Activated T-helper 1 cell treated with anti-CD3 and anti-CD28 coated beads, Interleukin-12 subunit alpha, Interleukin-12 subunit beta, Interleukin-2, Interleukin-4 antibody, amounts not matched to agents 30 ng/mL and 10 ng/mL and 1 ng/mL, durations not matched to agents 14 hours and 24 hours and 36 hours (primary cell): ENCODE measurements at regions of chr2 and their contacts with region 1.

Region 1: DNA sequence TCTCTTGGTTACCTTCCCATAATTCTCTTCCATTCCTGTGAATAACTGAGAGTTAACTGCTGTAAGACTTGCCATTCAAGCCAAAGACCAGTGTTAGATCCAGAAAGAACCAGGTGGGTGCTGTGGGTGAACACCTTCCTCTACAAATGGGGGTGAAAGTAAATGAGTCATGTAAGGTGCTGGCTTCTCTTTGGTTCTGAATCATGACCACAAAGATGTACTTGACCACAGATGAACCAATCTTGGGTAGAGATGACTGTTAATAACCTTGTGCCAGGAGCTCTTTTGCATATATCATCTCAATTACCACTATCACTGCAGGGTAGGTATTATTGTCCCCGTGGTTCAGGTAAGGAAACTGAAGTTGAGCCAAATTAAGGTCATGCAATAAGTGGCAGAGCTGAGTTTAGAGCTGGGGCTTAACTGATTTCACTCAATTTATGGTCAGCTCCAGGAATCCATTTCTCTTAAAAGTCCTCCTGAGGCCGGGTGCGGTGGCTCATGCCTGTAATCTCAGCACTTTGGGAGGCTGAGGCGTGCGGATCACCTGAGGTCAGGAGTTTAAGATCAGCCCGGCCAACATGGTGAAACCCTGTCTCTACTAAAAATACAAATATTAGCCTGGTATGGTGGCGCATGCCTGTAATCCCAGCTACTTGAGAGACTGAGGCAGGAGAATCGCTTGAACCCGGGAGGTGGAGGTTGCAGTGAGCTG is 244.9 kb upstream of the CXCR4 start:
- DNase-seq: no peak
- H3K4me3 Mint-ChIP-seq: peak overlapping the region; percentile 21
- H3K27ac Mint-ChIP-seq: peak overlapping the region; percentile 69
- H3K4me1 Mint-ChIP-seq: peaks cover 57% of the 10 kb centered on the region
- H3K27me3 Mint-ChIP-seq: peaks cover 4% of the 10 kb centered on the region

Region 2: GRCh38 chr2:136098441-136098840 is 264.4 kb before region 1 on chr2:
- intact Hi-C with region 1: no loop called
- DNase-seq: no peak
- H3K4me3 Mint-ChIP-seq: no peak overlapping the region
- H3K27ac Mint-ChIP-seq: no peak overlapping the region
- H3K4me1 Mint-ChIP-seq: peaks cover 5% of the 10 kb centered on the region
- H3K27me3 Mint-ChIP-seq: no peaks in the 10 kb centered on the region

Region 3: GRCh38 chr2:136207030-136207623 is 155.7 kb before region 1 on chr2:
- intact Hi-C with region 1: loop called (anchors 1 kb)
- DNase-seq: no peak
- H3K4me3 Mint-ChIP-seq: no peak overlapping the region
- H3K27ac Mint-ChIP-seq: peak overlapping the region; percentile 92
- H3K4me1 Mint-ChIP-seq: peaks cover 33% of the 10 kb centered on the region
- H3K27me3 Mint-ChIP-seq: peaks cover 2% of the 10 kb centered on the region

Region 4: GRCh38 chr2:136310797-136311603 is 51.8 kb before region 1 on chr2:
- intact Hi-C with region 1: loop called (anchors 1 kb)
- DNase-seq: no peak
- H3K4me3 Mint-ChIP-seq: peak overlapping the region; percentile 38
- H3K27ac Mint-ChIP-seq: peak overlapping the region; percentile 83
- H3K4me1 Mint-ChIP-seq: peaks cover 38% of the 10 kb centered on the region
- H3K27me3 Mint-ChIP-seq: peaks cover 4% of the 10 kb centered on the region